ENCODE measurements at regions of chr2 and their contacts with region 1.

Region 1: DNA sequence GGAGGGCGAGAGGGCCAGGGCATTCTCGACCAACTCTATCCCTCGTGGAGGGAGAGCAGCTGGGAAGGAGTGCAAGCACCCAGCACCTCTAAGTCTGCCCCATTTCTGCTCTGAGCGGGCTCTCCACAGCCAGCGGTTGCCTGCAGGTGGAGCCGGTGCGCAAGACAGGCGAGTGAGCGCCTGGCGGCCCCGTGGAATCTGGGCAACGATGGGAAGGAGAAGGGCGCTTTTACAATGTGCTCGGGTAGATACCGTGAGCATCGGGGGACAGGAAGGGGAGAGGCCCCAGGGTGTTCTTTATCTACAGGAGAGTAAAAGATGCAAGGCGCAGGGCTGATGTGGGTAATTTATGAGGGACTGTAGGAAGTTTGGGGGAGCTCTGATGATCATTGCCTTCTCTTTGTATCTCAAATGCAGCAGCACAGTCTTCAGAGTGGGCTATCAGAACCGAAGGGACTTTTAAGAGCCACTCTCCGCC is 867 bp upstream of the TTL start:
- DNase-seq: peak; percentile 26
- ATAC-seq: peak; percentile 90
- H3K4me3 ChIP-seq: peak overlapping the region; percentile 87
- H3K27ac ChIP-seq: peak overlapping the region; percentile 66
- H3K4me1 ChIP-seq: peaks cover 14% of the 10 kb centered on the region
- H3K27me3 ChIP-seq: no peaks in the 10 kb centered on the region
- CTCF ChIP-seq: peak; percentile 85 to 96 (median 95)
- EP300 ChIP-seq: no peak
- POLR2A ChIP-seq: no peak; the same call in none of the 2 replicates
- RAD21 ChIP-seq: peak; percentile 83

Region 2: GRCh38 chr2:112339986-112340385 is 141.1 kb before region 1 on chr2:
- CTCF ChIA-PET with region 1: no interaction called
- POLR2A ChIA-PET with region 1: interaction called, 10 read pairs
- RAD21 ChIA-PET with region 1: no interaction called
- SMC1A ChIA-PET with region 1: no interaction called
- in situ Hi-C with region 1: no loop called
- intact Hi-C with region 1: no loop called
- DNase-seq: no peak
- ATAC-seq: no peak
- H3K4me3 ChIP-seq: no peak overlapping the region
- H3K27ac ChIP-seq: no peak overlapping the region
- H3K4me1 ChIP-seq: peaks cover 6% of the 10 kb centered on the region
- H3K27me3 ChIP-seq: no peaks in the 10 kb centered on the region
- CTCF ChIP-seq: no peak
- EP300 ChIP-seq: no peak
- POLR2A ChIP-seq: no peak
- RAD21 ChIP-seq: no peak

Region 3: GRCh38 chr2:112542123-112542983 is 61.3 kb after region 1 on chr2 and contains the start of gene POLR1B:
- CTCF ChIA-PET with region 1: interaction called, 8 read pairs
- POLR2A ChIA-PET with region 1: no interaction called
- RAD21 ChIA-PET with region 1: no interaction called
- SMC1A ChIA-PET with region 1: interaction called, 4 read pairs
- in situ Hi-C with region 1: no loop called
- intact Hi-C with region 1: loop called (anchors 1 kb)
- DNase-seq: peak; percentile 65
- ATAC-seq: peak; percentile 88
- H3K4me3 ChIP-seq: peak within 1 kb of the TSS; percentile 85
- H3K27ac ChIP-seq: peak within 1 kb of the TSS; percentile 81
- H3K4me1 ChIP-seq: no peaks in the 10 kb centered on the region
- H3K27me3 ChIP-seq: no peaks in the 10 kb centered on the region
- CTCF ChIP-seq: no peak
- EP300 ChIP-seq: no peak; a peak in 1 of 4 replicates
- POLR2A ChIP-seq: peak; percentile 79
- RAD21 ChIP-seq: no peak
- polyA plus RNA-seq, gene POLR1B: 13.4 to 14.3 TPM

Region 4: GRCh38 chr2:112566104-112566503 is 85.0 kb after region 1 on chr2:
- CTCF ChIA-PET with region 1: interaction called, 8 read pairs
- POLR2A ChIA-PET with region 1: no interaction called
- RAD21 ChIA-PET with region 1: no interaction called
- SMC1A ChIA-PET with region 1: no interaction called
- in situ Hi-C with region 1: no loop called
- intact Hi-C with region 1: loop called (anchors 5 kb)
- DNase-seq: peak; percentile 16
- ATAC-seq: peak; percentile 85
- H3K4me3 ChIP-seq: no peak overlapping the region
- H3K27ac ChIP-seq: no peak overlapping the region
- H3K4me1 ChIP-seq: no peaks in the 10 kb centered on the region
- H3K27me3 ChIP-seq: no peaks in the 10 kb centered on the region
- CTCF ChIP-seq: no peak
- EP300 ChIP-seq: no peak
- POLR2A ChIP-seq: no peak
- RAD21 ChIP-seq: no peak

Measured in GM12878 (cell line).